Endothelial cell of umbilical vein (primary cell): ENCODE measurements at regions of chr1 and their contacts with region 1.

Region 1: GRCh38 chr1:211514030-211514754 is 22.2 kb upstream of the RD3 start:
- DNase-seq: peak; percentile 82
- H3K4me3 ChIP-seq: no peak overlapping the region
- H3K27ac ChIP-seq: no peak overlapping the region
- H3K4me1 ChIP-seq: peaks cover 10% of the 10 kb centered on the region
- H3K27me3 ChIP-seq: no peaks in the 10 kb centered on the region
- CTCF ChIP-seq: peak; percentile 78 to 85
- POLR2A ChIP-seq: no peak

Region 2: GRCh38 chr1:210584439-210585113 is 929.6 kb before region 1 on chr1:
- CTCF ChIA-PET with region 1: no interaction called
- POLR2A ChIA-PET with region 1: no interaction called
- dilution Hi-C with region 1: no loop called
- intact Hi-C with region 1: loop called (anchors 1 kb)
- DNase-seq: peak; percentile 27
- H3K4me3 ChIP-seq: no peak overlapping the region
- H3K27ac ChIP-seq: no peak overlapping the region
- H3K4me1 ChIP-seq: no peaks in the 10 kb centered on the region
- H3K27me3 ChIP-seq: no peaks in the 10 kb centered on the region
- CTCF ChIP-seq: peak; percentile 40
- POLR2A ChIP-seq: no peak

Region 3: GRCh38 chr1:211382714-211383480 is 131.3 kb before region 1 on chr1:
- CTCF ChIA-PET with region 1: interaction called, 6 read pairs
- POLR2A ChIA-PET with region 1: interaction called, 3 read pairs
- dilution Hi-C with region 1: no loop called
- intact Hi-C with region 1: loop called (anchors 1 kb)
- DNase-seq: peak; percentile 94
- H3K4me3 ChIP-seq: peak overlapping the region; percentile 50 to 77 (median 56)
- H3K27ac ChIP-seq: peak overlapping the region; percentile 96
- H3K4me1 ChIP-seq: peaks cover 11% of the 10 kb centered on the region
- H3K27me3 ChIP-seq: no peaks in the 10 kb centered on the region
- CTCF ChIP-seq: no peak
- POLR2A ChIP-seq: peak; percentile 98

Region 4: DNA sequence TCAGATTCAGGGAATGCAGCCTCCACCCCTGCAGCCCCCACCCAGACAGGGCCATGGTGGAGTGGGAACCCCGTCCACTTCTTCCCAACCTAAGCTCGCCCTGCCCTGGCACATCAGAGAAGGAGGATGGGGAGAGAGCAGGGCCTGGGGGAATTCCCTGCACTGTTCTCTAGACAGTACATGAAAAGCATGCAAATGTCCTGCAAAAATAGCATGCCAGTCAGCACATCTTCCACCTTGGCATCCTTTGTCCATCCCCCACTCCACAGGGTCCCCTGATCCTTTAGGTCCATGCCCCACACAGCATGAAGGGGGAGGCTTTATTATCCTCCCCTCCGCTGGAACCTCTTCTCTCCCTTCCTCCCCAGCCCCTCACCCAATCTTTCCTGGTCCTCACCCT is 12.8 kb after region 1 on chr1:
- CTCF ChIA-PET with region 1: interaction called, 25 read pairs
- POLR2A ChIA-PET with region 1: no interaction called
- dilution Hi-C with region 1: no loop called
- intact Hi-C with region 1: no loop called
- DNase-seq: no peak
- H3K4me3 ChIP-seq: no peak overlapping the region
- H3K27ac ChIP-seq: no peak overlapping the region
- H3K4me1 ChIP-seq: peaks cover 10% of the 10 kb centered on the region
- H3K27me3 ChIP-seq: no peaks in the 10 kb centered on the region
- CTCF ChIP-seq: no peak
- POLR2A ChIP-seq: no peak

Region 5: DNA sequence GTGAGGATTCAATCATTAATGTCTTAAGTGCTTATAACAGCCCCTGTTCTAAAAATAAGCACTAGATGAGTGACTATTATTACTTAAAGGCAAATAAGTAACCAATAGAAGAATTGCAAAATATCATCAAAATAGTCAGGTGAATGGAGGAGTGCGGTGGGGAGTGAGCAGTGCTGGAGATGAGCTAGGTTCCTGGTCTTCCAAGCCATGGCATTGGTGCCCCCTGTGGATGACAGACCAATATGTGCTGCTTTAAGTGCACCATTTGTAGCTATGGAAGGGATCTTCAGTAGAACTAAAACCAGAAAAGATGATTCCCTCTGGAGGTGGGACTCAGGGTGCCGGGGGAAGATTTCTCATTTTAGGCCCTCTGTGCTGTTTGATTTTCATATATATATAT is 110.8 kb after region 1 on chr1:
- CTCF ChIA-PET with region 1: interaction called, 21 read pairs
- POLR2A ChIA-PET with region 1: no interaction called
- dilution Hi-C with region 1: no loop called
- intact Hi-C with region 1: no loop called
- DNase-seq: no peak
- H3K4me3 ChIP-seq: no peak overlapping the region
- H3K27ac ChIP-seq: no peak overlapping the region
- H3K4me1 ChIP-seq: peaks cover 2% of the 10 kb centered on the region
- H3K27me3 ChIP-seq: no peaks in the 10 kb centered on the region
- CTCF ChIP-seq: no peak
- POLR2A ChIP-seq: no peak

Region 6: DNA sequence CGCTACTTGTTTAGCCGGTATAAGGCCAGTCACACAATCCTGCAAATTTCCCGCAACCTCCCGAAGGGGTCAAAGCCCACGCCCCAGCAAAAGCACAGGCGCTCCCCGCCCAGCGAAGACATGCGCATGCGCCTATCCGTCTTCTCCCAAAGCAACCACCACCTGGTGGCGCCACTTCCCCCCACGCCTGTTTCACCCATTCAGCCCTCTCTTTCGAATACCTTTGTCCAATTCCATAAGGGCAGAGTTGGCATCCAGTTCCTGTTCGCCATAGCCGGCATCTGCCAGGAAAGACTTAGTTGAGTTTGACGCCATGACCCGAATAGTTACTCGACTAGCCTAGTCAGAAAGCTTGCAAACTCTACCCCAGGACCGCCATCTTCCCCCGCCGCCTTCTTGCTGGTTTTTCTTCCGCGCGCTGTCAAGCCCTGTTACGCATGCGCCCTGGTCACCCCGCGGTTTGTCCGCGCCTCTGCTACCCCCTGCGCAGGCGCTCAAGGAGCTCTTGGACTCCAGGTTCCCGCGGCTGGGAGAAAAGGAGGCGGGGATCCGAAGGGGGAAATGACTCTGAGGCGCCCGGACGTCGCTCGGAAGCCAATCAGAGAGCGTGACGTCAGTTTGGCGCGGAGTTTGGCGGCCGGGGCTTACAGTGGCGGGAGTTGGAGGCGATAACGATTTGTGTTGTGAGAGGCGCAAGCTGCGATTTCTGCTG is 521.1 kb after region 1 on chr1 and contains the starts of genes DTL and INTS7:
- CTCF ChIA-PET with region 1: no interaction called
- POLR2A ChIA-PET with region 1: no interaction called
- dilution Hi-C with region 1: no loop called
- intact Hi-C with region 1: loop called (anchors 1 kb)
- DNase-seq: peak; percentile 99
- H3K4me3 ChIP-seq: peak within 1 kb of the TSS; percentile 70 to 94 (median 78)
- H3K27ac ChIP-seq: peak within 1 kb of the TSS; percentile 71
- H3K4me1 ChIP-seq: peaks cover 36% of the 10 kb centered on the region
- H3K27me3 ChIP-seq: no peaks in the 10 kb centered on the region
- CTCF ChIP-seq: peak; percentile 90 to 95
- POLR2A ChIP-seq: peak; percentile 76
- total RNA-seq, gene DTL: 26.5 and 27.2 TPM in 2 replicates
- total RNA-seq, gene INTS7: 16.1 and 18.1 TPM in 2 replicates